Activated naive CD4-positive, alpha-beta T cell treated with anti-CD3 and anti-CD28 coated beads for 36 hours (primary cell): ENCODE measurements at regions of chr15 and their contacts with region 1.

Region 1: DNA sequence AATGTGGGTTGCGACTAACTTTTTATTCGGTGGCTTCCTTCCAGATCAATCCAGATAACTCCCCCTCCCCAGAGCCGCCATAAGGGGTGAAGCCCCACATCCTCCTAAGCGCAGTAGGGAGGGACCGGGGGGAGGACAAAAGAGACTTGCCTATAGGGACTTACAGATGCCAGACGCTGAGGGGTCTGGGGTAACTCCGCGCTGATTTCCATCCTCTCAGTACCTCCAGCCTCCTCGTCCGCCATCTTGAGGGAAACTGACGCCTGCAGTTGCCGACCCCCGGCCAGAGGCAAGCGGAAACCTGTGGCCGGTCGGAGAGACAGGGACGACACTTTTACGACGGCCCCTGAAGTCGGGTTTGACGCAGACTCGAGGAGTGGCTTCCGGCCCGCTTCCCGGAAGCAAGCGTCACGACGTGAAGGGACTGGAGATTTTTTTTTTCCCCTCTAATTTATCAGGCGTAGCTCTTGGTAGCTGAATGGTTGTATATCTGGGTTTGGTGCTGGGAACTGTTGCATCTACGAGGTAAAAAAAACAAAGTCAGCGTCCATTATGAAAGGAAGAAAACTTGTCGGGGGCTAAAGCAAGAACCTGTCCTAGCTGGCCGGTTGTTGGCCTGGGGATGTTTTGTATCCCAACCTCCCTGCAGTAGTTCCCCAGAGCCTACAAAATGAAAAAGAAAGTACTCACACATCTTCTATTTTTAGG is at the start of gene UBR1:
- DNase-seq: peak; percentile 95
- H3K4me3 Mint-ChIP-seq: peak within 1 kb of the TSS; percentile 95
- H3K27ac Mint-ChIP-seq: peak within 1 kb of the TSS; percentile 95
- H3K4me1 Mint-ChIP-seq: peaks cover 39% of the 10 kb centered on the region
- H3K27me3 Mint-ChIP-seq: no peaks in the 10 kb centered on the region
- total RNA-seq, gene UBR1: 25.2 to 25.9 TPM

Region 2: GRCh38 chr15:42575188-42576039 is 530.5 kb before region 1 on chr15 and contains the start of gene STARD9:
- CTCF ChIA-PET with region 1: no interaction called
- intact Hi-C with region 1: loop called (anchors 10 kb)
- DNase-seq: peak; percentile 95
- H3K4me3 Mint-ChIP-seq: peak within 1 kb of the TSS; percentile 86
- H3K27ac Mint-ChIP-seq: no peak within 1 kb of the TSS
- H3K4me1 Mint-ChIP-seq: peaks cover 14% of the 10 kb centered on the region
- H3K27me3 Mint-ChIP-seq: peaks cover 28% of the 10 kb centered on the region
- total RNA-seq, gene STARD9: 1.9 to 2.5 TPM

Region 3: DNA sequence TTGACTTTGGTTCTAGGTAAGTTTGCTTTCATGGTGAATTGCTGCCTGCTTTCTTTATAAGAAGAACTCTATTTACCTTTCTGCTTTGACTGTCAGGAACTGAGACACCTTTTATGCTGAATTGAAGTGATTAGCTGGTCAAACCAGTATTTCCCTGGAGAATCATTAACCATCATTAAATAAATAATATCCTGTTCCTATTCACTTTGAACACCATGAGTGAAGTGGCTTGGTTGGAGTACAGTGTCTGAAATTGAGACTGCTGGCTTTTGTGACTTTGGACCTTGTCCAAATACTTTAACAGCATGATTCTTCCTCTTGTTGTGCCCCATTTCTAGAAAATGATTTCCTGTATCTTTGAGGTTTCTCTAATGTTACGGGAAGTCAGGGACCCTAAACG is 21.8 kb after region 1 on chr15:
- CTCF ChIA-PET with region 1: interaction called, 5 read pairs
- intact Hi-C with region 1: loop called (anchors 1 kb)
- DNase-seq: no peak
- H3K4me3 Mint-ChIP-seq: no peak overlapping the region
- H3K27ac Mint-ChIP-seq: no peak overlapping the region
- H3K4me1 Mint-ChIP-seq: peaks cover 10% of the 10 kb centered on the region
- H3K27me3 Mint-ChIP-seq: peaks cover 8% of the 10 kb centered on the region

Region 4: DNA sequence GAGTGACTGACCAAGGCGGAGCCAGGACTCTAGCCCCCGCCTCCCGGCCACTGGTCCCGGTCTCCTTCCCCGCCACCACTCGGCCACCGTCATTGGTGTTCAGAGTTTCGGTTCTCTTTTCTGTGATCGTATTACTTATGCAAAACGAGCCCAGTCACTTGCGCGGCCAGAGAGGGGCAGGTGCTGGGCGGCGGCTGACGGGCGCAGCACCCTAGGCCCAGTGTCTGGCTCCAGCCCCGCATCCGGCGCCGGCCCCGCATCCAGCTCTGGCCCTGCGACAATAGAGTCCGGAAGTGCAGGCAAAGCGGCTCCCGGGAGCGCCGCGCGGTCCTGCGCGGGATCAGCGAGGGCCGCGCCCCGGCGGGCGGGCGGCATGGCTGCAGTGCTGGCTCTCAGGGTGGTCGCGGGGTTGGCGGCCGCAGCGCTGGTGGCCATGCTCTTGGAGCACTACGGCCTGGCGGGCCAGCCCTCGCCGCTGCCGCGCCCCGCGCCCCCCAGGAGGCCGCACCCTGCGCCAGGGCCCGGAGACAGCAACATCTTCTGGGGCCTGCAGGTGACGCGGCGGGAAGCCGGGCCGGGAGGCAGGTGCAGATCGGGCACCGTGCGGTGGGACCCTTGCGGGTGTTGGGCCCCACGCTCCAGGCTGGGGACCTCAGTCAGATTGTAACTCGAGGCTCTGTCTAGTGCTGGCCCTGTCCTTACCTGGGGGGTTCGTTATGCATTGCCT is 27.7 kb after region 1 on chr15 and contains the start of gene TMEM62:
- CTCF ChIA-PET with region 1: interaction called, 5 read pairs
- intact Hi-C with region 1: loop called (anchors 1 kb)
- DNase-seq: peak; percentile 72
- H3K4me3 Mint-ChIP-seq: peak within 1 kb of the TSS; percentile 84
- H3K27ac Mint-ChIP-seq: peak within 1 kb of the TSS; percentile 80
- H3K4me1 Mint-ChIP-seq: peaks cover 16% of the 10 kb centered on the region
- H3K27me3 Mint-ChIP-seq: peaks cover 6% of the 10 kb centered on the region
- total RNA-seq, gene TMEM62: 5.8 to 6.6 TPM

Region 5: GRCh38 chr15:43185157-43186017 is 79.5 kb after region 1 on chr15 and contains the start of gene CCNDBP1:
- CTCF ChIA-PET with region 1: no interaction called
- intact Hi-C with region 1: loop called (anchors 1 kb)
- DNase-seq: peak; percentile 94
- H3K4me3 Mint-ChIP-seq: peak within 1 kb of the TSS; percentile 93
- H3K27ac Mint-ChIP-seq: peak within 1 kb of the TSS; percentile 91
- H3K4me1 Mint-ChIP-seq: peaks cover 15% of the 10 kb centered on the region
- H3K27me3 Mint-ChIP-seq: no peaks in the 10 kb centered on the region
- total RNA-seq, gene CCNDBP1: 54.6 to 62.1 TPM

Region 6: GRCh38 chr15:43329960-43330779 is 224.2 kb after region 1 on chr15 and contains the start of gene LCMT2:
- CTCF ChIA-PET with region 1: no interaction called
- intact Hi-C with region 1: loop called (anchors 2 kb)
- DNase-seq: peak; percentile 93
- H3K4me3 Mint-ChIP-seq: peak within 1 kb of the TSS; percentile 95
- H3K27ac Mint-ChIP-seq: peak within 1 kb of the TSS; percentile 97
- H3K4me1 Mint-ChIP-seq: peaks cover 28% of the 10 kb centered on the region
- H3K27me3 Mint-ChIP-seq: no peaks in the 10 kb centered on the region
- total RNA-seq, gene LCMT2: 4.2 to 4.3 TPM

Region 7: DNA sequence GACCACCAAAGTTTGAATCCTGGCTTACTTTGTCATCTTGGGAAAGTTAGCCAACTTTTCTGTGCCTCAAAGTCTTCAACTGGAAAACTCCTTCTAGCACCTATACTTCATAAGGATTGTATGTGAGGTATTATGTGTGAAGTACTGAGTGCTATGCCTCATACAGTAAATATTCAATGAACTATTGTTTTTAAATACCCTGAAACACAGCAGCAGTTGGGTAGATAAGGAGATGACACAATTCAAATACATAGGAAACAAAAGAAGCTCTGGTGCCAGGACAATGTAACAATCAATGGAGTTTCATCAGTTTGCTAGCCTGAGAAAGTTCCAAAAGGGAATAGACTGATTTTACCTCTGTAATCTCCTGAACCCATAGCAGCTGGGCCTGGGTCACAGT is 308.3 kb after region 1 on chr15:
- CTCF ChIA-PET with region 1: no interaction called
- intact Hi-C with region 1: no loop called
- DNase-seq: no peak
- H3K4me3 Mint-ChIP-seq: no peak overlapping the region
- H3K27ac Mint-ChIP-seq: no peak overlapping the region
- H3K4me1 Mint-ChIP-seq: no peaks in the 10 kb centered on the region
- H3K27me3 Mint-ChIP-seq: no peaks in the 10 kb centered on the region